ENCODE measurements at regions of chr11 and their contacts with region 1.

Region 1: GRCh38 chr11:60363542-60364510 is 14.5 kb upstream of the MS4A7 start:
- DNase-seq: peak; percentile 42
- ATAC-seq: peak; percentile 81
- H3K4me3 Mint-ChIP-seq: peak overlapping the region; percentile 83
- H3K27ac Mint-ChIP-seq: peak overlapping the region; percentile 93
- H3K4me1 Mint-ChIP-seq: peaks cover 80% of the 10 kb centered on the region
- H3K27me3 Mint-ChIP-seq: no peaks in the 10 kb centered on the region
- CTCF ChIP-seq: no peak

Region 2: GRCh38 chr11:60303661-60304060 is 60.2 kb before region 1 on chr11:
- CTCF ChIA-PET with region 1: no interaction called
- POLR2A ChIA-PET with region 1: no interaction called
- intact Hi-C with region 1: no loop called
- DNase-seq: no peak
- ATAC-seq: no peak
- H3K4me3 Mint-ChIP-seq: no peak overlapping the region
- H3K27ac Mint-ChIP-seq: no peak overlapping the region
- H3K4me1 Mint-ChIP-seq: peaks cover 23% of the 10 kb centered on the region
- H3K27me3 Mint-ChIP-seq: no peaks in the 10 kb centered on the region
- CTCF ChIP-seq: no peak

Region 3: DNA sequence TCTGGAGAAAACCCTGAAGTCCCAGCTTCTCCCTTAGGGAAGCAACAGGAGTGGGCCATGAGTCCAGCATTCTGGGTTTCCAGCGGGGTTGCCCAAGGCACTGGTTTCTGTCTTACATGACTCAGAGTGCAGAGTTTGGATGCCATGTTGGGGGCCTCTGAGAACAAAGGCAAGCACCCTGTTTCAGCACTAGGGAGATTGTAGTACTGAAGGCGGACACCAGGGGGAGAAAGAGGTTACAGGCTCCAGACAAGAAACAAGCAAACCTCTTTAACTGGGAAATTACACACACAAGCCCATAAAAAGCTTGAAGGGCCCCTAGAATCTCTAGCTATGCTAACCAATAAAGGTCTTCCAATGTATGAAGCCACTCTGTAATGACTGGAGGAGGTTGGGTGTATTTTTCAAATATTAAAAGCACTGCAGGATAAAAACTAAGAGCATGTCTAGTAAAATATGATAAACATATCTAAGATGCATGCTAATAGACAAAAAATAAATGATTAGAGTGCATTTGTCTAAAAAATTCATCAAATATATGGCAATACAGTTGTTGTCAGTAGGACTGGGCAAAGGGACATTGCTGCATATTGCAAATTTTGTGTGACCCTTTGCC is 29.7 kb before region 1 on chr11:
- CTCF ChIA-PET with region 1: interaction called, 29 read pairs
- POLR2A ChIA-PET with region 1: interaction called, 3 read pairs
- intact Hi-C with region 1: no loop called
- DNase-seq: peak; percentile 49
- ATAC-seq: peak; percentile 92
- H3K4me3 Mint-ChIP-seq: no peak overlapping the region
- H3K27ac Mint-ChIP-seq: no peak overlapping the region
- H3K4me1 Mint-ChIP-seq: peaks cover 20% of the 10 kb centered on the region
- H3K27me3 Mint-ChIP-seq: no peaks in the 10 kb centered on the region
- CTCF ChIP-seq: no peak

Region 4: GRCh38 chr11:60378354-60378753 is 14.5 kb after region 1 on chr11 and contains the start of gene MS4A7:
- CTCF ChIA-PET with region 1: interaction called, 15 read pairs
- POLR2A ChIA-PET with region 1: interaction called, 80 read pairs
- intact Hi-C with region 1: loop called (anchors 1 kb)
- DNase-seq: peak; percentile 41
- ATAC-seq: peak; percentile 85
- H3K4me3 Mint-ChIP-seq: peak within 1 kb of the TSS; percentile 90
- H3K27ac Mint-ChIP-seq: peak within 1 kb of the TSS; percentile 99
- H3K4me1 Mint-ChIP-seq: peaks cover 84% of the 10 kb centered on the region
- H3K27me3 Mint-ChIP-seq: no peaks in the 10 kb centered on the region
- CTCF ChIP-seq: no peak
- total RNA-seq, gene MS4A7: 43.1 and 51.1 TPM in 2 replicates

Region 5: DNA sequence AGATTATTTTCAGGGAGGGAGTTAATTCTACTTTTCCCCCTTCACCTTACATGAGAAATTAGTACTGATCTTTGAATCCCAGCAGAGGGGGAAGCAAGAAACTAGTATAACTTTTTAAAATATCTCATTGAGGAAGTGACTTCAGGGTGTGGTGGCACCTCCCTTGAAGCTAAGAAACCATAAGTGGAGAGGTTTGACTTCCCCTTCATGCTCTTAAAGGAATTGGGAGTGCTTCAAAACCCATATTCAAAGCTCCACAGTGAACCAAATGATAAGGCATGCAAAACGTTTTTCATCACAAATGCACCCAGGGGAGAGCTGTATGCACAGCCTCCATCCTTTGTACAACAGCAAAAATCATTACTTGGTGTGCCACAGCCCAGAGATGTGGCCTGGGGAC is 33.0 kb after region 1 on chr11:
- CTCF ChIA-PET with region 1: interaction called, 13 read pairs
- POLR2A ChIA-PET with region 1: interaction called, 80 read pairs
- intact Hi-C with region 1: loop called (anchors 1 kb)
- DNase-seq: no peak
- ATAC-seq: peak; percentile 92
- H3K4me3 Mint-ChIP-seq: peak overlapping the region; percentile 71
- H3K27ac Mint-ChIP-seq: peak overlapping the region; percentile 95
- H3K4me1 Mint-ChIP-seq: peaks cover 69% of the 10 kb centered on the region
- H3K27me3 Mint-ChIP-seq: no peaks in the 10 kb centered on the region
- CTCF ChIP-seq: no peak

Region 6: DNA sequence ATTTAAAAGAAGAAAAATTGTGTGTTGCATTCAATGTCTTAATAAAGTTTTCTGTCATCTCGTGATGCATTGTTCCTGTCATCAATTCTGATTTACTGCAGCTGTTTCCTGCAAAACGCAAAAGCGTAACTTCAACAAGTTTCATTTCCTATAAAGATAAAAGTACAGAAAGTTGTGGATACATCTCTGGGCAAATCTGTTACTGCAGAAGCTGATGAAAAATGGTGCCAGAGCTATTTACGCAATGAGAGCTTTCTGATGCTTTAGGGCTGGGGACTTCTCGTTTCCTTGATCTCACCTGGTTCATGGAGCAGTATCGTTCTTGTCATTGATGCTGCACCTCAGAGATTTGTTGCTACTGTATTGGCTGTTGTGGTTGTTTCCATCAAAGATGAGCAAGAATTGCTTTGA is 113.2 kb after region 1 on chr11:
- CTCF ChIA-PET with region 1: interaction called, 80 read pairs
- POLR2A ChIA-PET with region 1: interaction called, 133 read pairs
- intact Hi-C with region 1: loop called (anchors 1 kb)
- DNase-seq: no peak
- ATAC-seq: peak; percentile 95
- H3K4me3 Mint-ChIP-seq: peak overlapping the region; percentile 64
- H3K27ac Mint-ChIP-seq: peak overlapping the region; percentile 91
- H3K4me1 Mint-ChIP-seq: peaks cover 65% of the 10 kb centered on the region
- H3K27me3 Mint-ChIP-seq: no peaks in the 10 kb centered on the region
- CTCF ChIP-seq: no peak

Region 7: GRCh38 chr11:60615497-60615896 is 251.7 kb after region 1 on chr11:
- CTCF ChIA-PET with region 1: interaction called, 44 read pairs
- POLR2A ChIA-PET with region 1: interaction called, 4 read pairs
- intact Hi-C with region 1: loop called (anchors 1 kb)
- DNase-seq: no peak
- ATAC-seq: no peak
- H3K4me3 Mint-ChIP-seq: no peak overlapping the region
- H3K27ac Mint-ChIP-seq: no peak overlapping the region
- H3K4me1 Mint-ChIP-seq: peaks cover 10% of the 10 kb centered on the region
- H3K27me3 Mint-ChIP-seq: peaks cover 9% of the 10 kb centered on the region
- CTCF ChIP-seq: no peak

Region 8: GRCh38 chr11:60634126-60634525 is 270.3 kb after region 1 on chr11:
- CTCF ChIA-PET with region 1: interaction called, 12 read pairs
- POLR2A ChIA-PET with region 1: interaction called, 24 read pairs
- intact Hi-C with region 1: loop called (anchors 1 kb)
- DNase-seq: no peak
- ATAC-seq: peak; percentile 59
- H3K4me3 Mint-ChIP-seq: peak overlapping the region; percentile 58
- H3K27ac Mint-ChIP-seq: peak overlapping the region; percentile 78
- H3K4me1 Mint-ChIP-seq: peaks cover 41% of the 10 kb centered on the region
- H3K27me3 Mint-ChIP-seq: peaks cover 5% of the 10 kb centered on the region
- CTCF ChIP-seq: peak; percentile 42

Measured in activated B cell treated with CpG ODN at 0.5 μM for 24 hours (primary cell).